CD4-positive, alpha-beta memory T cell (primary cell): ENCODE measurements at regions of chr13 and their contacts with region 1.

Region 1: GRCh38 chr13:77026818-77027585 is at the start of gene FBXL3:
- DNase-seq: peak; percentile 83 to 87 (median 87)
- H3K4me3 ChIP-seq: peak within 1 kb of the TSS; percentile 66 to 86
- H3K4me3 Mint-ChIP-seq: peak within 1 kb of the TSS; percentile 96 to 100 (median 99)
- H3K27ac ChIP-seq: peak within 1 kb of the TSS; percentile 94
- H3K27ac Mint-ChIP-seq: peak within 1 kb of the TSS; percentile 80 to 99 (median 97)
- H3K4me1 ChIP-seq: peaks cover 48% of the 10 kb centered on the region
- H3K4me1 Mint-ChIP-seq: peaks cover 29 to 62% (median 46%) of the 10 kb centered on the region in 4 donors
- H3K27me3 ChIP-seq: no peaks in the 10 kb centered on the region
- H3K27me3 Mint-ChIP-seq: no peaks in the 10 kb centered on the region
- total RNA-seq, gene FBXL3: 94.2 to 96.2 TPM

Region 2: DNA sequence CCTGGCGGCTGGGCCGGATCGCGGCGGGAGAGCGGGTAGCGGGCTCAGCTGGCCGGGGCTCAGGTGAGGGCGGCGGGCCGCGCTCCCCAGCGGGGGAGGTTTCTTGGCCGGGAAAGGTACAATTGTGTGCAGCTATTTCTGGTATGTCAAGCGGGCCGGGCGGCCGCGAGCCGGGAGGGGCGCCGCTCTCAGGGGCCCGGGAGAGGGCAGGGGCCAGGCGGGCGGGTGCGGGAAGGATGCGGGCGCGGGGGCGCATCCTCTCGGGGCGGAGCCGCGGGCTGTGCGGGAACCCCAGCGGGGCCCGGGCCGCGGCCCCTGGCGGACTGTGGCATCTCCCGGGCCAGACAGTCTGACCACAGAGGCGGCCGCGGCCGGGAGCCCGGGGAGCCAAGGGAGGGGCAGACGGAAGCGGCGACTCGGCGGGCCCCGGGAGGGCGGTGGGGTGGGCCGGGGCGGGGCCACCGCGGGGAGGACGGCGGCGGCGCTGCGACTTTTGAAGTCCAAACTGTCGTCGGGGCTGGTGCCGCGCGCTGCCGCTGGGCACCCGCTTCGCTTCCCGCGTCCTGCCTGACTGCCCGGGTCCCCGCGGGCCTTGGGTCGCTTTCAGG is 1391.1 kb before region 1 on chr13 and contains the start of gene LMO7:
- CTCF ChIA-PET with region 1: no interaction called
- POLR2A ChIA-PET with region 1: no interaction called
- intact Hi-C with region 1: loop called (anchors 10 kb)
- DNase-seq: peak; percentile 51 to 65 (median 55)
- H3K4me3 ChIP-seq: peak within 1 kb of the TSS; percentile 59 to 70
- H3K4me3 Mint-ChIP-seq: peak within 1 kb of the TSS; percentile 82 to 90 (median 86)
- H3K27ac ChIP-seq: peak within 1 kb of the TSS; percentile 31
- H3K27ac Mint-ChIP-seq: peak within 1 kb of the TSS; percentile 47 to 88 (median 74)
- H3K4me1 ChIP-seq: peaks cover 6% of the 10 kb centered on the region
- H3K4me1 Mint-ChIP-seq: peaks cover 12 to 19% (median 14%) of the 10 kb centered on the region in 4 donors
- H3K27me3 ChIP-seq: no peaks in the 10 kb centered on the region
- H3K27me3 Mint-ChIP-seq: peaks cover 0 to 4% of the 10 kb centered on the region in 2 donors
- total RNA-seq, gene LMO7: 25.7 to 29.4 TPM

Region 3: GRCh38 chr13:76023652-76024051 is 1003.4 kb before region 1 on chr13:
- CTCF ChIA-PET with region 1: no interaction called
- POLR2A ChIA-PET with region 1: no interaction called
- intact Hi-C with region 1: no loop called
- DNase-seq: no peak
- H3K4me3 ChIP-seq: no peak overlapping the region
- H3K4me3 Mint-ChIP-seq: no peak overlapping the region
- H3K27ac ChIP-seq: no peak overlapping the region
- H3K27ac Mint-ChIP-seq: no peak overlapping the region
- H3K4me1 ChIP-seq: no peaks in the 10 kb centered on the region
- H3K4me1 Mint-ChIP-seq: no peaks in the 10 kb centered on the region
- H3K27me3 ChIP-seq: no peaks in the 10 kb centered on the region
- H3K27me3 Mint-ChIP-seq: peaks cover 0 to 5% of the 10 kb centered on the region in 2 donors

Region 4: GRCh38 chr13:77002590-77003190 is 24.3 kb before region 1 on chr13:
- CTCF ChIA-PET with region 1: interaction called, 19 read pairs
- POLR2A ChIA-PET with region 1: interaction called, 42 read pairs
- intact Hi-C with region 1: loop called (anchors 2 kb)
- DNase-seq: peak in 1 of 5 donors; percentile 19
- H3K4me3 ChIP-seq: no peak overlapping the region
- H3K4me3 Mint-ChIP-seq: no peak overlapping the region
- H3K27ac ChIP-seq: no peak overlapping the region
- H3K27ac Mint-ChIP-seq: peak overlapping the region; percentile 5 to 85 (median 30)
- H3K4me1 ChIP-seq: peaks cover 43% of the 10 kb centered on the region
- H3K4me1 Mint-ChIP-seq: peaks cover 25 to 44% (median 35%) of the 10 kb centered on the region in 4 donors
- H3K27me3 ChIP-seq: no peaks in the 10 kb centered on the region
- H3K27me3 Mint-ChIP-seq: no peaks in the 10 kb centered on the region

Region 5: GRCh38 chr13:77009011-77009410 is 18.0 kb before region 1 on chr13:
- CTCF ChIA-PET with region 1: interaction called, 3 read pairs
- POLR2A ChIA-PET with region 1: interaction called, 42 read pairs
- intact Hi-C with region 1: loop called (anchors 2 kb)
- DNase-seq: no peak
- H3K4me3 ChIP-seq: no peak overlapping the region
- H3K4me3 Mint-ChIP-seq: peak overlapping the region in 1 of 8 donors; percentile 28
- H3K27ac ChIP-seq: no peak overlapping the region
- H3K27ac Mint-ChIP-seq: peak overlapping the region in 6 of 7 donors; percentile 47 to 74 (median 62)
- H3K4me1 ChIP-seq: peaks cover 35% of the 10 kb centered on the region
- H3K4me1 Mint-ChIP-seq: peaks cover 24 to 51% (median 36%) of the 10 kb centered on the region in 4 donors
- H3K27me3 ChIP-seq: no peaks in the 10 kb centered on the region
- H3K27me3 Mint-ChIP-seq: no peaks in the 10 kb centered on the region

Region 6: GRCh38 chr13:77042566-77043178 is 15.7 kb after region 1 on chr13:
- CTCF ChIA-PET with region 1: no interaction called
- POLR2A ChIA-PET with region 1: interaction called, 18 read pairs
- intact Hi-C with region 1: no loop called
- DNase-seq: no peak
- H3K4me3 ChIP-seq: no peak overlapping the region
- H3K4me3 Mint-ChIP-seq: no peak overlapping the region
- H3K27ac ChIP-seq: no peak overlapping the region
- H3K27ac Mint-ChIP-seq: peak overlapping the region in 2 of 7 donors; percentile 1 to 25
- H3K4me1 ChIP-seq: no peaks in the 10 kb centered on the region
- H3K4me1 Mint-ChIP-seq: peaks cover 0 to 7% (median under 1%) of the 10 kb centered on the region in 4 donors
- H3K27me3 ChIP-seq: no peaks in the 10 kb centered on the region
- H3K27me3 Mint-ChIP-seq: no peaks in the 10 kb centered on the region